Pancreas (tissue), 10 donors: ENCODE measurements at regions of chr5 and their contacts with region 1.

Region 1: GRCh38 chr5:34007621-34008600 is at the start of gene AMACR:
- DNase-seq: peak; percentile 89 to 96 (median 93)
- ATAC-seq: peak; percentile 91 to 96 (median 94)
- H3K4me3 ChIP-seq: peak within 1 kb of the TSS; percentile 64 to 89 (median 73)
- H3K27ac ChIP-seq: peak within 1 kb of the TSS; percentile 87 to 96 (median 92)
- H3K4me1 ChIP-seq: peaks cover 10 to 15% (median 14%) of the 10 kb centered on the region in 3 donors
- H3K27me3 ChIP-seq: no peaks in the 10 kb centered on the region
- CTCF ChIP-seq: no peak
- total RNA-seq, gene AMACR: 7.8 to 15.1 (median 10.1) TPM

Region 2: GRCh38 chr5:33934176-33934575 is 73.7 kb before region 1 on chr5:
- intact Hi-C with region 1: no loop called
- DNase-seq: no peak
- ATAC-seq: no peak
- H3K4me3 ChIP-seq: no peak overlapping the region
- H3K27ac ChIP-seq: no peak overlapping the region
- H3K4me1 ChIP-seq: no peaks in the 10 kb centered on the region
- H3K27me3 ChIP-seq: peaks cover 0 to 23% (median 7%) of the 10 kb centered on the region in 4 donors
- CTCF ChIP-seq: no peak

Region 3: DNA sequence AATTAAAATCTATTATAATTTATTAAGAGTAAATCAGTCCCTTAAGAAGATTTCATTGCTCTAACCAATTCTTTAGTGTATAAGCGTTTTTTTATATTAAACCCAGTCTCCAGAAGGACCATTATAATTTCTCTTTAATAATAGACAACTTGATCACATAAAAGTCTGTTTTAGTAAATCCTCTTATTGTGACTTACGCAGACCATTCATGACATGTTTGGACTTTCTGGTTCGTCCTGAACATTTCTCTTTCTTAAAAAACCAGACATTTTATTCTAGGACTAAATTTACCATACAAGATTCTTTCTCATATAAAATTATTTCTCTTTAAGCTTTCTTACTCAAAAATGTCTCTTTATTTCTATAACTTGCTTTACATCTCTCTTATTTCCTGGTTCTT is 452.0 kb after region 1 on chr5:
- intact Hi-C with region 1: loop called in 1 of 3 experiments (anchors 10 kb)
- DNase-seq: no peak
- ATAC-seq: no peak
- H3K4me3 ChIP-seq: no peak overlapping the region
- H3K27ac ChIP-seq: no peak overlapping the region
- H3K4me1 ChIP-seq: no peaks in the 10 kb centered on the region
- H3K27me3 ChIP-seq: no peaks in the 10 kb centered on the region
- CTCF ChIP-seq: no peak